ENCODE measurements at regions of chr3 and their contacts with region 1.

Region 1: GRCh38 chr3:141279077-141279967 is 47.7 kb downstream of the PXYLP1 start:
- DNase-seq: peak in 3 of 9 experiments; percentile 30 to 65 (median 46)
- ATAC-seq: peak; percentile 89
- H3K4me3 ChIP-seq: no peak overlapping the region
- H3K4me3 Mint-ChIP-seq: no peak overlapping the region
- H3K27ac ChIP-seq: no peak overlapping the region
- H3K27ac Mint-ChIP-seq: peak overlapping the region; percentile 32
- H3K4me1 ChIP-seq: peaks cover 18% of the 10 kb centered on the region
- H3K4me1 Mint-ChIP-seq: peaks cover 23% of the 10 kb centered on the region
- H3K27me3 ChIP-seq: no peaks in the 10 kb centered on the region
- H3K27me3 Mint-ChIP-seq: no peaks in the 10 kb centered on the region
- CTCF ChIP-seq: peak; percentile 59

Region 2: GRCh38 chr3:141000027-141000663 is 279.2 kb before region 1 on chr3:
- CTCF ChIA-PET with region 1: no interaction called
- POLR2A ChIA-PET with region 1: no interaction called
- intact Hi-C with region 1: loop called in 1 of 2 experiments (anchors 5 kb)
- DNase-seq: peak in 8 of 9 experiments; percentile 3 to 72 (median 48)
- ATAC-seq: peak; percentile 87
- H3K4me3 ChIP-seq: no peak overlapping the region
- H3K4me3 Mint-ChIP-seq: no peak overlapping the region
- H3K27ac ChIP-seq: no peak overlapping the region
- H3K27ac Mint-ChIP-seq: no peak overlapping the region
- H3K4me1 ChIP-seq: no peaks in the 10 kb centered on the region
- H3K4me1 Mint-ChIP-seq: no peaks in the 10 kb centered on the region
- H3K27me3 ChIP-seq: no peaks in the 10 kb centered on the region
- H3K27me3 Mint-ChIP-seq: no peaks in the 10 kb centered on the region
- CTCF ChIP-seq: peak; percentile 39

Region 3: GRCh38 chr3:141174674-141175073 is 104.6 kb before region 1 on chr3:
- CTCF ChIA-PET with region 1: no interaction called
- POLR2A ChIA-PET with region 1: no interaction called
- intact Hi-C with region 1: no loop called
- DNase-seq: no peak
- ATAC-seq: no peak
- H3K4me3 ChIP-seq: no peak overlapping the region
- H3K4me3 Mint-ChIP-seq: no peak overlapping the region
- H3K27ac ChIP-seq: no peak overlapping the region
- H3K27ac Mint-ChIP-seq: no peak overlapping the region
- H3K4me1 ChIP-seq: no peaks in the 10 kb centered on the region
- H3K4me1 Mint-ChIP-seq: no peaks in the 10 kb centered on the region
- H3K27me3 ChIP-seq: no peaks in the 10 kb centered on the region
- H3K27me3 Mint-ChIP-seq: peaks cover 13% of the 10 kb centered on the region
- CTCF ChIP-seq: no peak

Region 4: GRCh38 chr3:141237701-141238521 is 41.4 kb before region 1 on chr3:
- CTCF ChIA-PET with region 1: interaction called, 81 read pairs
- POLR2A ChIA-PET with region 1: no interaction called
- intact Hi-C with region 1: loop called (anchors 1 kb)
- DNase-seq: peak in 3 of 9 experiments; percentile 19 to 55 (median 29)
- ATAC-seq: no peak
- H3K4me3 ChIP-seq: no peak overlapping the region
- H3K4me3 Mint-ChIP-seq: peak overlapping the region; percentile 69
- H3K27ac ChIP-seq: peak overlapping the region in 1 of 2 experiments; percentile 66
- H3K27ac Mint-ChIP-seq: peak overlapping the region; percentile 90
- H3K4me1 ChIP-seq: peaks cover 74% of the 10 kb centered on the region
- H3K4me1 Mint-ChIP-seq: peaks cover 90% of the 10 kb centered on the region
- H3K27me3 ChIP-seq: no peaks in the 10 kb centered on the region
- H3K27me3 Mint-ChIP-seq: no peaks in the 10 kb centered on the region
- CTCF ChIP-seq: no peak

Region 5: DNA sequence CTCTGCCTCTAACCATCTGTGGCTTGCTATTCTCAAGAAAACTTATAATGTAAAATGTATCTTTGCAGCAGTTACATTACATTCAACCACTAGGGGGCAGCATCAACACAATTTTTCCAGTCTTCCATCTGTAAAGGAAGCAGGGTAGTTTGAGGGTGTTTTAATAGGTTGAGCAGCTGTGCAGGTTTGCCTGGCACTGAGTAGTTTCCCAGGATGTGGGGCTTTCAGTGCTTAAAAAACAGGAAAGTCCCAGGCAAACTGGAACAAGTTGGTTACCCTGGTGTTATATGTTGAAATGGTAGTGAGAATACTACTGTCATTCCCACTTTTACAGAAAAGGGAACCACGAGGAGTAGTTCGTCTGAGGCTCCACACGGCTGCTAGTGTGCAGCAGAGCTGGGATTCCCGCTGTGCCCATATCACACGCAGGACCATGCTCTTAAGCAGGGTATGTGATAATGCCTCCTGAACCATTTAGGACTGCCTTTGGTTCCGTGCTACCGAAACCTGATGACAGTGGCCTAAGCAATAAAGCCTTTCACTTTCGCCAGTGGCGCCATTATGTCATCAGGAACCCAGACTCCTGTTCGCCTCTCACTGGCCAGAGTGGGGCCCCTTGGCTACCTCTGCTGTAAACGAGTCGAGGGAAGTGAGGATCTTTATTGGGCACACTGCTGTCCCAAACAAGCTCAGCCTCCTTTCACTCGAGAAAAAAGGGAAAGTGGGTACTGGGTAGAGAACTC is 24.3 kb after region 1 on chr3:
- CTCF ChIA-PET with region 1: interaction called, 24 read pairs
- POLR2A ChIA-PET with region 1: no interaction called
- intact Hi-C with region 1: no loop called
- DNase-seq: peak in 8 of 9 experiments; percentile 40 to 85 (median 64)
- ATAC-seq: peak; percentile 56
- H3K4me3 ChIP-seq: no peak overlapping the region
- H3K4me3 Mint-ChIP-seq: no peak overlapping the region
- H3K27ac ChIP-seq: no peak overlapping the region
- H3K27ac Mint-ChIP-seq: no peak overlapping the region
- H3K4me1 ChIP-seq: peaks cover 60% of the 10 kb centered on the region
- H3K4me1 Mint-ChIP-seq: peaks cover 66% of the 10 kb centered on the region
- H3K27me3 ChIP-seq: no peaks in the 10 kb centered on the region
- H3K27me3 Mint-ChIP-seq: no peaks in the 10 kb centered on the region
- CTCF ChIP-seq: peak; percentile 85